ENCODE measurements at regions of chr1 and their contacts with region 1.

Region 1: DNA sequence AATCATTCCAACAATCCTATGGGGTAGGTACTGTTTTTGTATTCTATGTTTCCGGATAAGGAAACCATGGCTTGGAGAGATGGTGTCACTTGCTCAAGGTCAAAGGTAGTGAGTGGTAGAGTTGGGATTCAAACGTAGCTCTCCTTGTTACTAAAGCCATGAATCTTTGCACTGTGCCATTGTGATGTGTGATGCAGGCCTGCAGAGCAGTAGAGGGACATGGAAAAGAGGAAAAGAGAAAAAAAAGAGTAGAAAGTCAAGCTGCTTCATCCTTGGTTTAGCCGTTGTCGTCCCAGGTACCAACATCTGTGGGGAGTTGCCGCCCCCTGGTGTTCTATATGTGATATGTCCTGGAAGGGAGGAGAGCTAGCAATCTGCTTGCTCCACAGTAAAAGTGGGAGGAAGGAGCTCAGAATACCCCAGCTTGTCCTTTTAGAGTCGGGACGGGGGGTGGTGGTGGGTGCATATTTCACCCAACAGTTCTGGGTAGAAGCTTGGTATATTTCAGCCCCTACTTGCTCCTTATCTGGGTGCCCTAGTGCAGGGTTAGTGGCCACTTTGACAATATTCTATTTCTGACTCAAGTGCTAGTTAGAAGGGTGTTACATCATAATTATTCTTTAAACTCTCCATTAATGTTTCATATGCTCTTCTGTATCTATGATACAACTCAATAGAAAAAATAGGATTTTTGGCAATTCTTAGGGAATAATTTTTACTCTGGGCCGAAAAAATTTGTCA is 98.4 kb downstream of the EBNA1BP2 start:
- DNase-seq: peak; percentile 84
- H3K4me3 ChIP-seq: no peak overlapping the region
- H3K27ac ChIP-seq: no peak overlapping the region
- H3K4me1 ChIP-seq: peaks cover 12% of the 10 kb centered on the region
- H3K27me3 ChIP-seq: no peaks in the 10 kb centered on the region
- CTCF ChIP-seq: peak; percentile 87

Region 2: DNA sequence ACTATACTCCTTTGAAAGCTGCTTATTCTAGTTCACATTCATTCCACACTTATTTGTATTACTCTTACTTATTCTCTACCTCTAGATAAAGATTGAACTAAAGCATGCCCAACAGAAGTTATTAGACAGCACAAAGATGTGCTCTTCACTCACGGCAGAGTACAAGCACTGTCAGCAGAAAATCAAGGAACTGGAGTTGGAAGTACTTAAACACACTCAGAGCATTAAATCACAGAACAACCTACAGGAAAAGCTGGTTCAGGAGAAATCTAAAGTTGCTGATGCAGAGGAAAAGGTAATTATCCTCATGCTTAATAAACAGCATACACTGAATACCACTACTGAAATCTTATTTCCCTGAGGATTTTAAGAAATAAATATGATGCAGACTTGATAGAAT is 496.7 kb before region 1 on chr1:
- CTCF ChIA-PET with region 1: no interaction called
- POLR2A ChIA-PET with region 1: no interaction called
- intact Hi-C with region 1: loop called (anchors 5 kb)
- DNase-seq: peak; percentile 10
- H3K4me3 ChIP-seq: no peak overlapping the region
- H3K27ac ChIP-seq: no peak overlapping the region
- H3K4me1 ChIP-seq: no peaks in the 10 kb centered on the region
- H3K27me3 ChIP-seq: no peaks in the 10 kb centered on the region
- CTCF ChIP-seq: no peak

Region 3: GRCh38 chr1:42777852-42778251 is 295.8 kb before region 1 on chr1:
- CTCF ChIA-PET with region 1: interaction called, 24 read pairs
- POLR2A ChIA-PET with region 1: no interaction called
- intact Hi-C with region 1: loop called (anchors 1 kb)
- DNase-seq: peak; percentile 59
- H3K4me3 ChIP-seq: no peak overlapping the region
- H3K27ac ChIP-seq: no peak overlapping the region
- H3K4me1 ChIP-seq: no peaks in the 10 kb centered on the region
- H3K27me3 ChIP-seq: no peaks in the 10 kb centered on the region
- CTCF ChIP-seq: peak; percentile 77

Region 4: GRCh38 chr1:42924082-42924850 is 149.4 kb before region 1 on chr1:
- CTCF ChIA-PET with region 1: interaction called, 52 read pairs
- POLR2A ChIA-PET with region 1: no interaction called
- intact Hi-C with region 1: no loop called
- DNase-seq: peak; percentile 96
- H3K4me3 ChIP-seq: peak overlapping the region; percentile 69
- H3K27ac ChIP-seq: peak overlapping the region; percentile 53
- H3K4me1 ChIP-seq: peaks cover 10% of the 10 kb centered on the region
- H3K27me3 ChIP-seq: no peaks in the 10 kb centered on the region
- CTCF ChIP-seq: no peak

Region 5: GRCh38 chr1:42944246-42945188 is 129.1 kb before region 1 on chr1:
- CTCF ChIA-PET with region 1: interaction called, 13 read pairs
- POLR2A ChIA-PET with region 1: no interaction called
- intact Hi-C with region 1: no loop called
- DNase-seq: no peak
- H3K4me3 ChIP-seq: no peak overlapping the region
- H3K27ac ChIP-seq: peak overlapping the region; percentile 46
- H3K4me1 ChIP-seq: peaks cover 22% of the 10 kb centered on the region
- H3K27me3 ChIP-seq: no peaks in the 10 kb centered on the region
- CTCF ChIP-seq: no peak

Region 6: DNA sequence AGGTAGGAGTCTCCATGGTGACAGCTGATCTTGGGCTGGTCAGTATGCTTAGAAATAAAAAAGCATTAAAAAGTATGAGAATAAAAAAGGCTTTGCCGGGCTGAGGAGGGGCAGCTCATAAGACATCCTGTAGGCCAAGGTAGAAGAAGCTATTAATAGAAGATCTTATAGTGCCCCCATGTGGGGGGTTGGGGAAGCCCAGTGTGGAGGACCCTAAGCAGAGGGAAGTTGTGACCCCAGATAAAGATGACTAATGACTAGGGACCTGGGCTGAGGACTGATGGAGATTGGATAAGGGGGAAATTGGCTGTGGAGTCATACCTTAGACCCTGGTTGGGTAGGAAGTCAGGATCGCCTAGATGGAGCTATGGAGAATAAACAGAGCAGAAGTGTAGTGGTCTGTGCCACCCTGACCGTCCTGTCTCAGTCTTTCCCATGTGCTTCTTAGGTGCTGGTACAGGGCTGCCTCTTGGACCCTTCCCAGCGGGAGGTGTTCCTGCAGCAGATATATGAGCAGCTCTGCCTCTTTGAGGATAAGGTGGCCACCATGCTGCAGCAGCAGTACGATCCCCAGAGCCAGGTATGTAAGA is 341.1 kb after region 1 on chr1:
- CTCF ChIA-PET with region 1: interaction called, 10 read pairs
- POLR2A ChIA-PET with region 1: no interaction called
- intact Hi-C with region 1: no loop called
- DNase-seq: peak; percentile 77
- H3K4me3 ChIP-seq: no peak overlapping the region
- H3K27ac ChIP-seq: no peak overlapping the region
- H3K4me1 ChIP-seq: no peaks in the 10 kb centered on the region
- H3K27me3 ChIP-seq: no peaks in the 10 kb centered on the region
- CTCF ChIP-seq: peak; percentile 70

Measured in A673 (cell line).